Right ventricle myocardium inferior (tissue), 1 donor: ENCODE measurements at regions of chr11 and their contacts with region 1.

Region 1: GRCh38 chr11:35100013-35100383 is 39.0 kb upstream of the CD44 start:
- DNase-seq: no peak
- ATAC-seq: peak; percentile 85

Region 2: DNA sequence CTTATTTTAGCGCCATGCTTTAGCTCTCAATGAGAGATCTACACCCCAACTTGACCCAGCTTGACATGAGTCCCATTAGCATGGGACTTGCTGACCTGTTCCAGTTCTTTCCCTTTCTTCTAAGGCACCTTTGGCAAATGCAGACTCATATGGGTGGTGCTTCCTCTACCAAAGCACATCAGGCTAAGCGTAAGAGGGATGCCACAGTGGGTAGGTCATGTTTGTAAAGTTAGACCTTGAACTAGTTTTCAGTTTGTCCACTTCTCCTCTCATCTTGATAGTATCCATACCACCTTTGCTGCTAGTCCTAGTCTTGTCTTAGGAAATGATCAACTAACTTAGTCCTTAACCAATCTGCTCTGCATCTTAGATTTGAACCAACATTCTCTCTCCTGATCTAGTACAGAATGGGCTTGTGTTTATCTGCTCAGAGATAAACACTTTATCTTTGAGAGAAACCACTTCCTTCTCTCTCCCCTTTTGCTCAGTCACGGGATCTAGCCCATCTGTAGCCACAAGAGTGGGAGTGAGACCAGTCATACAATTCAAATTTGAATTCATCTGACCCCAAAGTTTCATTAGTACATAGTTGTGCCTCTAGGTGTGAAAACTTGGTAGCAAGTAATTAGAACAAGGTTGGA is 33.1 kb before region 1 on chr11:
- intact Hi-C with region 1: no loop called
- DNase-seq: no peak
- ATAC-seq: no peak

Region 3: DNA sequence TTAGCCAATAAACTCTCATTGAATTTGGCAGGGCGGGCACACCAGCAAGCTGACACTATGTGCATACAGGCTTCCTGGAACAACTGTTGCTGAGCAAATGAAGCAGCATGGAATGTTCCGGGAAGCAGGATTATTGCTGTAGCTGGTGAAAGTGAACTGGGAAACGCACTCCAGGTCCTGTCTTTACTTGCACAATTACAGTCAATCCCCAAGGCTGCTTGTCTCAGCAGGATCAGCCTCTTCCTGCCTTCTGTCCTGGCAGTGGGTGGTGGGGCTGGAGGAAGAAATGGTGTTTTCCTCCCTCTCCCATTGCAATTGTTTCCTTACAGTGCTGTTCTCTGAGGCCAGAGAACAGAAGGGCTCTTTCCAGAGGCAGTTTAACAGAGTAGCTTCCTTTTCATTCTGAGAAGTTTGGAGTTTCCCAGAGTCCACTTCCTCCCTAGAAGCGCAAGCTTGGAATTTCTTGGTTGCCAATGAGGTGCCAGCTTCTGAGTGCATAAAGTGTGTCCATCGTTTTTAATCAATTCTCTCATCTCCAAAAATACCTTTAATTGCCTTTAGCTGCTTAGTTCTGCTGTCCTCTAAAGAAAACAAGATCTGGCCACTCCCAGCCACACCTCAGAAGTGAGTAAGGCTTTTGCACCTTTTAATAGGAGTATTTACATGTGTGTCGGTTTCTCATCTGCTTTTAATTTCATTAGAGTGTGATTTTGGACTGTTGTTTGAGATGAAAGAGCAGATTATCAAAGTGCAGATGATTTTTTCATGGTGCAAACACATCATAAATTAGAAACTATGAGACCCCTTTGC is 58.9 kb after region 1 on chr11:
- intact Hi-C with region 1: loop called (anchors 5 kb)
- DNase-seq: no peak
- ATAC-seq: peak; percentile 88